B cell (primary cell): ENCODE measurements at regions of chr19 and their contacts with region 1.

Region 1: GRCh38 chr19:44770550-44771257 is 7.0 kb upstream of the CBLC start:
- DNase-seq: peak; percentile 98
- ATAC-seq: peak; percentile 100
- H3K4me3 ChIP-seq: peak overlapping the region in 3 of 5 experiments; percentile 8 to 32 (median 18)
- H3K4me3 Mint-ChIP-seq: peak overlapping the region; percentile 63
- H3K27ac ChIP-seq: no peak overlapping the region
- H3K27ac Mint-ChIP-seq: peak overlapping the region; percentile 74
- H3K4me1 ChIP-seq: peaks cover 8 to 20% of the 10 kb centered on the region in 2 donors
- H3K4me1 Mint-ChIP-seq: peaks cover 28% of the 10 kb centered on the region
- H3K27me3 ChIP-seq: no peaks in the 10 kb centered on the region
- H3K27me3 Mint-ChIP-seq: no peaks in the 10 kb centered on the region
- CTCF ChIP-seq: peak; percentile 76

Region 2: GRCh38 chr19:44689056-44689895 is 81.4 kb before region 1 on chr19:
- CTCF ChIA-PET with region 1: interaction called, 66 read pairs
- POLR2A ChIA-PET with region 1: no interaction called
- intact Hi-C with region 1: loop called (anchors 1 kb)
- DNase-seq: peak; percentile 82
- ATAC-seq: peak; percentile 54
- H3K4me3 ChIP-seq: no peak overlapping the region
- H3K4me3 Mint-ChIP-seq: no peak overlapping the region
- H3K27ac ChIP-seq: no peak overlapping the region
- H3K27ac Mint-ChIP-seq: no peak overlapping the region
- H3K4me1 ChIP-seq: peaks cover 23 to 44% of the 10 kb centered on the region in 2 donors
- H3K4me1 Mint-ChIP-seq: peaks cover 33% of the 10 kb centered on the region
- H3K27me3 ChIP-seq: peaks cover 0 to 3% (median 0%) of the 10 kb centered on the region in 4 experiments
- H3K27me3 Mint-ChIP-seq: peaks cover 13% of the 10 kb centered on the region
- CTCF ChIP-seq: peak; percentile 93

Region 3: GRCh38 chr19:44741841-44742352 is 28.8 kb before region 1 on chr19:
- CTCF ChIA-PET with region 1: interaction called, 30 read pairs
- POLR2A ChIA-PET with region 1: no interaction called
- intact Hi-C with region 1: no loop called
- DNase-seq: no peak
- ATAC-seq: peak; percentile 46
- H3K4me3 ChIP-seq: no peak overlapping the region
- H3K4me3 Mint-ChIP-seq: no peak overlapping the region
- H3K27ac ChIP-seq: no peak overlapping the region
- H3K27ac Mint-ChIP-seq: peak overlapping the region; percentile 7
- H3K4me1 ChIP-seq: peaks cover 2 to 22% of the 10 kb centered on the region in 2 donors
- H3K4me1 Mint-ChIP-seq: peaks cover 23% of the 10 kb centered on the region
- H3K27me3 ChIP-seq: no peaks in the 10 kb centered on the region
- H3K27me3 Mint-ChIP-seq: no peaks in the 10 kb centered on the region
- CTCF ChIP-seq: no peak

Region 4: GRCh38 chr19:44752816-44753618 is 17.7 kb before region 1 on chr19:
- CTCF ChIA-PET with region 1: interaction called, 46 read pairs
- POLR2A ChIA-PET with region 1: interaction called, 65 read pairs
- intact Hi-C with region 1: loop called (anchors 1 kb)
- DNase-seq: peak; percentile 97
- ATAC-seq: peak; percentile 69
- H3K4me3 ChIP-seq: peak overlapping the region; percentile 44 to 94 (median 69)
- H3K4me3 Mint-ChIP-seq: peak overlapping the region; percentile 97
- H3K27ac ChIP-seq: peak overlapping the region; percentile 92
- H3K27ac Mint-ChIP-seq: peak overlapping the region; percentile 98
- H3K4me1 ChIP-seq: peaks cover 55 to 69% of the 10 kb centered on the region in 2 donors
- H3K4me1 Mint-ChIP-seq: peaks cover 59% of the 10 kb centered on the region
- H3K27me3 ChIP-seq: no peaks in the 10 kb centered on the region
- H3K27me3 Mint-ChIP-seq: no peaks in the 10 kb centered on the region
- CTCF ChIP-seq: no peak

Region 5: GRCh38 chr19:44845612-44846454 is 75.1 kb after region 1 on chr19 and contains the start of gene NECTIN2:
- CTCF ChIA-PET with region 1: interaction called, 5 read pairs
- POLR2A ChIA-PET with region 1: no interaction called
- intact Hi-C with region 1: loop called (anchors 10 kb)
- DNase-seq: peak; percentile 79
- ATAC-seq: peak; percentile 64
- H3K4me3 ChIP-seq: peak within 1 kb of the TSS; percentile 19 to 64 (median 47)
- H3K4me3 Mint-ChIP-seq: peak within 1 kb of the TSS; percentile 83
- H3K27ac ChIP-seq: no peak within 1 kb of the TSS
- H3K27ac Mint-ChIP-seq: peak within 1 kb of the TSS; percentile 20
- H3K4me1 ChIP-seq: peaks cover 35% of the 10 kb centered on the region in 2 donors
- H3K4me1 Mint-ChIP-seq: peaks cover 22% of the 10 kb centered on the region
- H3K27me3 ChIP-seq: peaks cover 0 to 44% (median 19%) of the 10 kb centered on the region in 4 experiments
- H3K27me3 Mint-ChIP-seq: peaks cover 38% of the 10 kb centered on the region
- CTCF ChIP-seq: no peak
- total RNA-seq, gene NECTIN2: 0.32 TPM in 1 of 2 replicates, not detected in the other

Region 6: DNA sequence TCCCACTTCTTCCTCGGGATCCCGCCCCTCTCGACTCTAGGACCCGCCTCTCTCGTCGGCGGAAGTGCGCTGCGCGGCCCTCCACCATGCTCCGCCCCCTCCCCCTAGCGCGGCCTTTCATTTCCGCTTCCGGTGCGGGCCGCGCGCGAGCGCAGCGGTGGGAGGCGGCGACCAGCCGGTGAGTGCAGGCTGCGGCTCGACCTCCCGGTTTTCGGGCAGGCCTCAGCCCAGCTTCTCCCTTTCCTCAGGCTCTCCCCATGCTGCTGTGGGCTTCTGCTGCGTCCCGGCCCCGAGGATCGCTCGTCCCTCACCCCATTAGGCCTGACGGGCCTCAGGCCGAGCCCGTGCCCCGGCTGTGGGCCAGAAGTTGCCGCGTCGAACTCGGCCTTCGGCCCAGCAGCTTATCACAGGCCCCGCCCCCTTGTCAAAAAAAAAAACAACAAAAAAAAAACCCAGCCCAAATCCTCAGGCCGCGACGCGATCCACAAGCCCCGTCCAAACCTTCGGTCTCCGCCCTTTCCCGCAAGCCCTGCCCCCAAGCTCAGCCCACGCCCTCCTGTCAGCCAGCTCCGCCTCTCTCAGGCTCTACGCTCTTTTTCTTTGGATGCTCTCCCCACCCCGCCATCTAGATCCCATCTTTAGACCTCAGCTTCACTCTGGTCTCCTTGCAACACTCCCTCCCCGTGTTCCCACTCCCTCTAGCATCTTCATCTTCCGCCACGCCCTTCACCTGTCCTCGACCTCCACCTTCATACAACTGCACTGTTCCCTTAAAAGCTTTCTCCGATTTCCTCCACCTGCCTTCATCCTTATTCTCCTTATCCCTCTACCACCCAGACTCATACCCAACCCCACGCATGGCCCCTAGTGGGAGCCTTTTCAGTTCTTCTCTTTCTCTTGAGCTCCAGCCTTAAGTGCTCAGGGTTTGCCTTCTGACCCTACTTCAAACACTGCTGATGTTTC is 268.5 kb after region 1 on chr19 and contains the start of gene CLASRP:
- CTCF ChIA-PET with region 1: no interaction called
- POLR2A ChIA-PET with region 1: no interaction called
- intact Hi-C with region 1: no loop called
- DNase-seq: peak; percentile 93
- ATAC-seq: peak; percentile 89
- H3K4me3 ChIP-seq: peak within 1 kb of the TSS; percentile 51 to 96 (median 94)
- H3K4me3 Mint-ChIP-seq: peak within 1 kb of the TSS; percentile 96
- H3K27ac ChIP-seq: peak within 1 kb of the TSS; percentile 93 to 96
- H3K27ac Mint-ChIP-seq: peak within 1 kb of the TSS; percentile 96
- H3K4me1 ChIP-seq: peaks cover 26 to 35% of the 10 kb centered on the region in 2 donors
- H3K4me1 Mint-ChIP-seq: peaks cover 40% of the 10 kb centered on the region
- H3K27me3 ChIP-seq: no peaks in the 10 kb centered on the region
- H3K27me3 Mint-ChIP-seq: no peaks in the 10 kb centered on the region
- CTCF ChIP-seq: no peak
- total RNA-seq, gene CLASRP: 277 and 285 TPM in 2 replicates